ENCODE measurements at regions of chr22 and their contacts with region 1.

Region 1: GRCh38 chr22:42964994-42965699 is 49.8 kb downstream of the PACSIN2 start:
- DNase-seq: peak; percentile 52
- H3K4me3 Mint-ChIP-seq: no peak overlapping the region
- H3K27ac Mint-ChIP-seq: no peak overlapping the region
- H3K4me1 Mint-ChIP-seq: peaks cover 36% of the 10 kb centered on the region
- H3K27me3 Mint-ChIP-seq: no peaks in the 10 kb centered on the region
- CTCF ChIP-seq: no peak

Region 2: DNA sequence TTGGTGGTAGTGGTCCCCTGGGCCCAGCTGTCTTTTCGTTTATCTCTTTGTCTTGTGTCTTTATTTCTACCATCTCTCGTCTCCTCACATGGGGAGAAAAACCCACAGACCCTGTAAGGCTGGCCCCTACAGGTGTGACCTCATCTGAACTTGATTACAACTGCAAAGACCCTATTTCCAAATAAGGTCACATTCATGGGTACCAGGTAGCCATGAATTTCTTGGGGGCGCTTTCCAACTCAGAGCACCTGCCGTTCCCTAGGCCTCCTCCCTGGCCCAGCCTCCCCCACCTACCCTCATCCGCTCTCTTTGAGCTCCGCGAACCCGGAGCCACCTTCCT is 431.5 kb before region 1 on chr22:
- CTCF ChIA-PET with region 1: no interaction called
- POLR2A ChIA-PET with region 1: no interaction called
- intact Hi-C with region 1: no loop called
- DNase-seq: no peak
- H3K4me3 Mint-ChIP-seq: peak overlapping the region; percentile 75
- H3K27ac Mint-ChIP-seq: peak overlapping the region; percentile 89
- H3K4me1 Mint-ChIP-seq: peaks cover 8% of the 10 kb centered on the region
- H3K27me3 Mint-ChIP-seq: peaks cover 15% of the 10 kb centered on the region
- CTCF ChIP-seq: no peak

Region 3: GRCh38 chr22:42939941-42940653 is 25.1 kb before region 1 on chr22:
- CTCF ChIA-PET with region 1: no interaction called
- POLR2A ChIA-PET with region 1: interaction called, 14 read pairs
- intact Hi-C with region 1: no loop called
- DNase-seq: peak; percentile 89
- H3K4me3 Mint-ChIP-seq: no peak overlapping the region
- H3K27ac Mint-ChIP-seq: peak overlapping the region; percentile 88
- H3K4me1 Mint-ChIP-seq: peaks cover 51% of the 10 kb centered on the region
- H3K27me3 Mint-ChIP-seq: no peaks in the 10 kb centered on the region
- CTCF ChIP-seq: no peak

Region 4: DNA sequence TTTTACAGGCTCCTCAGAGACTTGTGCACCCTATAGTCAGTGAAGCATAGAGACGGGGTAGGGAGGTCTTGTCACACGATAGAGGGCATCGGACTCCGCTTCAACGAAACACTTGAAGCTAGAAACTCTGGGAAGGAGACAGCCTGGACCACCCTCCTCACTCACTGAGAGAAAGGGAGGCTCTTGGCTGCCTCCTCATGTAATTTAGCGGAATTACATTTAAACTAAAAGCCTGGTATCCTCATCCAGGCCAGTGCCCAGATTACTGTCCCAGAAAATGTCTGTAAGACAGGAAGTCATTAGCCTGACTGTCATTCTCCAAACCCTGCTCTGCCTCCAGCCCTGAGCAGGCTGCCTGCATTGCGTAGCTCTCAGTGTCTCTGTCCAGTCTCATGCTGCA is 88.0 kb after region 1 on chr22:
- CTCF ChIA-PET with region 1: no interaction called
- POLR2A ChIA-PET with region 1: no interaction called
- intact Hi-C with region 1: no loop called
- DNase-seq: no peak
- H3K4me3 Mint-ChIP-seq: no peak overlapping the region
- H3K27ac Mint-ChIP-seq: no peak overlapping the region
- H3K4me1 Mint-ChIP-seq: no peaks in the 10 kb centered on the region
- H3K27me3 Mint-ChIP-seq: no peaks in the 10 kb centered on the region
- CTCF ChIP-seq: no peak

Region 5: GRCh38 chr22:43100211-43100610 is 135.1 kb after region 1 on chr22:
- CTCF ChIA-PET with region 1: no interaction called
- POLR2A ChIA-PET with region 1: no interaction called
- intact Hi-C with region 1: no loop called
- DNase-seq: no peak
- H3K4me3 Mint-ChIP-seq: no peak overlapping the region
- H3K27ac Mint-ChIP-seq: no peak overlapping the region
- H3K4me1 Mint-ChIP-seq: peaks cover 12% of the 10 kb centered on the region
- H3K27me3 Mint-ChIP-seq: no peaks in the 10 kb centered on the region
- CTCF ChIP-seq: no peak